ENCODE measurements at regions of chr11 and their contacts with region 1.

Region 1: DNA sequence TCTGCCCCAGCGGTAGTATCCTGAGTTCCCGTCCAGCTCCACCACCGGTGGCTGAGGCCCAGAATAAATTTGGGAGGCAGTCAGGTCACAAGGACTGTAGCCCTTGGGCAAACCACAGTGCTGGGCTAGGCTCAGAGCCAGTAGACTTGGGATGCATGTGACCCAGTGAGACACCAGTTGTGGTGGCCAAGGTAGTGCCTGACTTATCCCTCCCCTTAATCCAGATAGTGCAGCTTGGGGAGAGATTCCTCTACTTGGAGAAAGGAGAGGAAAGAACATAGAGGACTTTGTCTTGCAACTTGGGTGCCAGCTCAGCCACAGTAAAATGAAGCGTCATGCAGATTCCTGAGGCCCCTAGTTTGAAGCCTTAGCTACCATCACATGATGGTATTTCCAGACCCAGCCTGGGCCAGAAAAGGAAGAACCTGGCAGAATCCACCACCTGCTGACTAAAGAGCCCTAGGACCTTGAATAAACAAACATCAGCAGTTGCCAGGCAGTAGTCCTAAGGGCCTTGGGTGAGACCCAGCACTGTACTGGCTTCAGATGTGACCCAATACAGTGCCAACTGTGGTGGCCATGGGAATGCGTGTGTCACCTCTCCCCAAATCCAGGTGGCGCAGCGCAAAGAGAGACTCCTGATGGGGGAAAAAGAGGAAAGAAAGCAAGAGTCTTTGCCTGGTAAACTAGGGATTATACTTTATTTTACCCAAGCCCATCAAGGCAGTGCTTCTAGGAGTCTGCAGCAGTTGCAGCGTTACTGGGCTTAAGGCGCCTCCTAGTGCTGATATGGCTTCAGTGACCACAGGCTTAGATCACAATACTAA is 17.0 kb upstream of the DDX10 start:
- DNase-seq: peak in 1 of 2 donors; percentile 71
- H3K4me3 ChIP-seq: no peak overlapping the region
- H3K27ac ChIP-seq: peak overlapping the region; percentile 34 to 47
- H3K4me1 ChIP-seq: peaks cover 0 to 6% of the 10 kb centered on the region in 2 donors
- H3K27me3 ChIP-seq: no peaks in the 10 kb centered on the region
- CTCF ChIP-seq: peak; percentile 64 to 66 (median 64)

Region 2: GRCh38 chr11:108340970-108341369 is 306.9 kb before region 1 on chr11:
- intact Hi-C with region 1: loop called (anchors 10 kb)
- DNase-seq: no peak
- H3K4me3 ChIP-seq: no peak overlapping the region
- H3K27ac ChIP-seq: no peak overlapping the region
- H3K4me1 ChIP-seq: no peaks in the 10 kb centered on the region
- H3K27me3 ChIP-seq: no peaks in the 10 kb centered on the region
- CTCF ChIP-seq: no peak

Region 3: DNA sequence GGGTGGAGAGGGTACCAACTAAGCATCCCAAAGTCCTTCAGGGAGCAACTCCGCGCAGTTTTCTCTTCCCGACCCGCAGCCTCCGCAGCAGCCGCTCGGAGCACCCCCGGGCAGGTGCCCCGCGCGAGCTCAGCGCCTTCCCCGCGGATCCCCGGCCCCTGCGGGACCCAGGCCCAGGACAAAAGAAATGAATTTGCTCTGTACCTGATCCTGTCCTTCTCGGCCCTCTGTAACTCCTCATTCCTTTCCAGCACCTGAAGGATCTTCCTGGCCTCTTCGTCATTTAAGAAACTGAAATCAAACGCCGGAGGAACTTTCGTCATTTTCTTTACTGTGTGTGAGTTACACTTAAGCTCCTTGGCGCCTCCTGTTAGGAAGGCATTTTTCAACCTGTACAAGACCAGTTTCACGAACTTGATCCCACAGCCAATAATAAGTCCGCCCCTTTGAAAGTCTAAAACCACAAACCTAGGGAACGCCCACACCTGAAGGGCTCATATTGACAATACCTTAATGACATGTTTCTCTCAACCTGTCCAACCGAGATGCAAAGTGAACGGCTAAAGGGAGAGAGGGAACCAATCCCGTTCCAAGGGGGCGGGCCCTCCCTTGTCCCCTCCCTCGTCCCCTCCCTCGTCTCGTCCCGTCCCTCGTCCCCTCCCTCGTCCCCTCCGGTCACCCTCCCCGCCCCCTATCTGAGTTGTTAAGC is 54.5 kb before region 1 on chr11 and contains the start of gene EXPH5:
- intact Hi-C with region 1: loop called (anchors 5 kb)
- DNase-seq: peak; percentile 53 to 90
- H3K4me3 ChIP-seq: peak within 1 kb of the TSS; percentile 73 to 81
- H3K27ac ChIP-seq: peak within 1 kb of the TSS; percentile 9 to 52
- H3K4me1 ChIP-seq: no peaks in the 10 kb centered on the region
- H3K27me3 ChIP-seq: no peaks in the 10 kb centered on the region
- CTCF ChIP-seq: no peak
- total RNA-seq, gene EXPH5: 1.1 TPM

Region 4: DNA sequence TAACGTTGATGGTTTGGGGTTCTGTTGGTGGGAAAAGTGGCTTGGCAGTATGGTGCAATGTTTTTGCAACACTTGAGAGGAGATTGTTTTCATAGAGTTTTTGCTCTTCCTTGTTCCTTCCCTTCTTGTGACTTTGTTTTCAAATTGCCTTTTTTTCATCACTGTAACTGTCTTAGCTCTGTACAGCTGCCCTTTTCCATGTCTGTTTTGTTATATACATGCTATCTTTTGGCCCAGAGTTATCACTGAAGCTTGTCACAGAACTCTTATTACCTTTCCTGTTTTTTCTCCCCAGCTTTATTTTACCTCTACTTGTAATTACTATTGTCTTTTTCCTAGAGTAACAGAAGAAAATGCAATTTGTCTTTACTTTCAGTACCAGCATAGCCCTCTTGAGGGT is 171.1 kb after region 1 on chr11:
- intact Hi-C with region 1: no loop called
- DNase-seq: no peak
- H3K4me3 ChIP-seq: no peak overlapping the region
- H3K27ac ChIP-seq: no peak overlapping the region
- H3K4me1 ChIP-seq: no peaks in the 10 kb centered on the region
- H3K27me3 ChIP-seq: no peaks in the 10 kb centered on the region
- CTCF ChIP-seq: no peak

Measured in ascending aorta (tissue), 2 donors.